ENCODE measurements at regions of chr2 and their contacts with region 1.

Region 1: GRCh38 chr2:44291281-44292248 is 16.3 kb downstream of the SLC3A1 start:
- DNase-seq: peak; percentile 27 to 74 (median 59)
- H3K4me3 ChIP-seq: no peak overlapping the region
- H3K27ac ChIP-seq: no peak overlapping the region
- H3K4me1 ChIP-seq: peaks cover 9 to 10% of the 10 kb centered on the region in 2 donors
- H3K27me3 ChIP-seq: no peaks in the 10 kb centered on the region
- CTCF ChIP-seq: peak; percentile 19 to 71 (median 57)
- POLR2A ChIP-seq: no peak

Region 2: GRCh38 chr2:44044281-44044720 is 247.3 kb before region 1 on chr2:
- intact Hi-C with region 1: loop called in 1 of 2 experiments (anchors 5 kb)
- DNase-seq: peak; percentile 82 to 92 (median 89)
- H3K4me3 ChIP-seq: no peak overlapping the region
- H3K27ac ChIP-seq: no peak overlapping the region
- H3K4me1 ChIP-seq: peaks cover 0 to 6% of the 10 kb centered on the region in 2 donors
- H3K27me3 ChIP-seq: no peaks in the 10 kb centered on the region
- CTCF ChIP-seq: peak; percentile 66 to 87 (median 84)
- POLR2A ChIP-seq: no peak

Region 3: DNA sequence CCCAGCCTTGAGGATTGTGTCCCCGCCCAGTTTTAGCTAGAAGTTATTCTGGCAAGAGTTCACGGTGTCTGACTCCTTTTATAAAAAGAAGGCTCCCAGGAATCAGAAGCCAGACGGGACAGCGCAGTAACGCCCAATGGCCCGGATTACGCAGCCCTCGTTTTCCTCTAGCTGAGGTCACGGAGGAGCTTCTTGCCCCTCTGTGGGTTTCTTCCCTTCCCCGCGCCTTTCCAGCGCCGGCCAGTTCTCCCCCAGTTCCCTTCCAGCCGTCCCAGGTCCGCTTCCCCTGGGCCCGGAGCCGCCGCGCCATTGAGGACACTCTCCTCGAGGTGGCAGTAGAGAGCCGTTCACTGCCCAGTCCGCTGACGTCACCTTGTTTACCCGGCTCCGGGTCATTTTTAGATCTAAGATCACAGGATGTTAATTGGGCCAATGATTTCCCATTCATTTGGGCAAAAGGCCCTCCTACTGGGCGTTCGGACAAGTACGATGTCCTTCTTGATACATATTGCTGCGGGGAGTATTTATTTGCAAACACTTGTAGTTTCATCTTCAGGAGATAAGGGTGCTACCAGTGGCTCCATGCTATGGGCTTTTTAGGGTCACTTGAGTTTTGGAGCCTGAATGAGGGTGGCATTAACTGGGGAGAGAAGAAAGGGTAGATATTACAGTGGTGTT is 204.4 kb before region 1 on chr2:
- intact Hi-C with region 1: loop called (anchors 5 to 10 kb)
- DNase-seq: peak; percentile 78 to 96 (median 91)
- H3K4me3 ChIP-seq: peak overlapping the region in 1 of 4 donors; percentile 50
- H3K27ac ChIP-seq: peak overlapping the region in 3 of 5 donors; percentile 13 to 72 (median 27)
- H3K4me1 ChIP-seq: peaks cover 0 to 5% of the 10 kb centered on the region in 2 donors
- H3K27me3 ChIP-seq: no peaks in the 10 kb centered on the region
- CTCF ChIP-seq: peak; percentile 91 to 96 (median 94)
- POLR2A ChIP-seq: no peak

Region 4: DNA sequence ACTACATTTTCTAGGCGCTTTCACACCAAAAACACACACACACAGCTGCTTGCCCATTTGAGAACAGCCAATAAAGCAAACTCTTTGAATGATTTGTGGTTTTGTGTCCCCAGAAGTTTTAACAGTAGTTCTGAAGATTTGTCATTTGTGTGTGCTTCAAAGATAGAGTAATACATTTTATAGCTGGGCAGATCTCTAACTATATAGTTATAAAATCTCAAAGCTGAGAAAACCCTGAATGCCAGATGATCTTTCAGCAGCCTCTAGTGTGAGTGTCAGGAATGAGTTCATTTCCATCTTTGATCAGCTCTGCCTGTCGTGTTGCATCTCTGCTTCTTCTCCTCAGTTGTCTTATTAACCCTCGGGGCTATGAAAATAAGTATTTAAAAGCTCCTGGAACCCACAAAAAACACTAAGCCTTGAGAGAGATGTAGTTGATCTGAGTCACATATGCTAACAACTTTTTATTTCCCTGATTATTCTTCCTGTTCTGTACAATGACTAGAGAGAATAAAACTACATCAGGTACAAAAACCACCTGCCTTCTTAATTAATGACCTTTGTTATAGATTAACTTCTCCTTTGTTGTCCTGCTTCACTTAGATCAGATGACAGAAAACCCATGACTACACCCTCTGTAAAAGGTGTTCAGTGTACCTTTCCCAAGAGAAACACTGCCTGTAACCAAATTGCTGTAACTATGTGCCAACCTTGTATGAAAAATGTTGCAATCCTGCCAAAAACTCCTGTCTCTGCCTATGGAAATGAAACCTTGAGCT is 46.3 kb before region 1 on chr2:
- intact Hi-C with region 1: loop called in 1 of 2 experiments (anchors 5 kb)
- DNase-seq: no peak
- H3K4me3 ChIP-seq: no peak overlapping the region
- H3K27ac ChIP-seq: no peak overlapping the region
- H3K4me1 ChIP-seq: peaks cover 0 to 9% of the 10 kb centered on the region in 2 donors
- H3K27me3 ChIP-seq: no peaks in the 10 kb centered on the region
- CTCF ChIP-seq: no peak
- POLR2A ChIP-seq: no peak

Region 5: DNA sequence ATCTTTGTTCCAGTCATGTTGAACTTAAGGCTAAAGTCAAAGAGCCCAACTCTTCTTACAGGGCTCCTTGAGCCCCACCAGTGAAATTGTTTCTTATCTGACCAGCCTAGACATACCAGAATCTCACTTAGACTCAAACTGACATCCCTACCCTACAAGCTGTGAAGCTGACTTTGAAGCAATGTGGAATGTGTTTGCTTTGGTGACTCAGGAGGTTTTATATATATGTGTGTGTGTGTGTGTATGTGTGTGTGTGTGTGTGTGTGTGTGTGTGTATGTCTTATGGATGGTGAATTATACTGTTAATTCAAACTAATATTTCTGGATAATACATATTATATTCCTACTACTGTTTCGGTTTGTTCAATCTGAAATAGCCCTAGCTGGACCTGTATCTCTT is 137.5 kb after region 1 on chr2:
- intact Hi-C with region 1: no loop called
- DNase-seq: no peak
- H3K4me3 ChIP-seq: no peak overlapping the region
- H3K27ac ChIP-seq: no peak overlapping the region
- H3K4me1 ChIP-seq: peaks cover 0 to 10% of the 10 kb centered on the region in 2 donors
- H3K27me3 ChIP-seq: no peaks in the 10 kb centered on the region
- CTCF ChIP-seq: no peak
- POLR2A ChIP-seq: no peak

Measured in adrenal gland (tissue), 19 donors.